ENCODE measurements at regions of chr6 and their contacts with region 1.

Region 1: DNA sequence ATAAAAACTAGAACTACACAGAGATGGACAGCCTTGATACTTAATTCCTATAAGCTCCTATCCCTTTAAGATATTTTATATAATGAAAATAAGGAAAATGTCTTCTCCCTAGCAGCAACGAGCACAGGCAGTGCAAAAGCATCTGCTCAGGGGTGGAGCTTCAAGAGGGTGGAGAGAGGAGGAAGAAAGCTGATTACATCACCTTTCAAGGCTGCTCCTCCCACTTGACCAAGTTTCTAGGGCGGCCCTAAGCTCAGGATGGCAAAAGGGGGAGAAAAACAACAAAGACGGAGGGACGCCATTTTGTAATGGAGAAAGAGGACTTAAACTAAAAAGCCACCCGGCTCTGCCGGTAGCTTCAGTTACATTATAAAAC is 2.2 kb downstream of the PPP1R10 start:
- DNase-seq: peak; percentile 76
- ATAC-seq: peak; percentile 63
- H3K4me3 Mint-ChIP-seq: peak overlapping the region; percentile 96
- H3K27ac Mint-ChIP-seq: peak overlapping the region; percentile 100
- H3K4me1 Mint-ChIP-seq: peaks cover 42% of the 10 kb centered on the region
- H3K27me3 Mint-ChIP-seq: no peaks in the 10 kb centered on the region; the same call in 1 of the 2 replicates
- CTCF ChIP-seq: no peak

Region 2: DNA sequence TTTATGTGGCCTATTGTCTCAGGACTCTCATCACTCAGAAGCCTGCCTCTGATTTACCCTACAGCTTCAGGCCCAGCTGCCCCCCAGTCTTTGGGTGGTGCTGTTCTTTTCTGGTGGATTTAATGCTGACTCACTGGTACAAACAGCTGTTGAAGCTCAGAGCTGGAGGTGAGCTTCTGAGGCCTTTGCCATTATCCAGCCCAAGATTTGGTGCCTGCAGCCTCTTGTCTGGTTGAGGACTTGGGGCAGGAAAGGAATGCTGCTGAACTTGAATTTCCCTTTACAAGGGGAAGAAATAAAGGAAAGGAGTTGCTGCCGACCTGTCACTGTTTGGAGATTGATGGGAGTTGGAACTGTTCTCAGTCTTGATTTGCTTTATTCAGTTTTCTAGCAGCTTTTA is 23.8 kb before region 1 on chr6:
- CTCF ChIA-PET with region 1: interaction called, 13 read pairs
- POLR2A ChIA-PET with region 1: interaction called, 33 read pairs
- DNase-seq: no peak
- ATAC-seq: no peak
- H3K4me3 Mint-ChIP-seq: no peak overlapping the region
- H3K27ac Mint-ChIP-seq: no peak overlapping the region
- H3K4me1 Mint-ChIP-seq: no peaks in the 10 kb centered on the region
- H3K27me3 Mint-ChIP-seq: no peaks in the 10 kb centered on the region
- CTCF ChIP-seq: no peak

Region 3: DNA sequence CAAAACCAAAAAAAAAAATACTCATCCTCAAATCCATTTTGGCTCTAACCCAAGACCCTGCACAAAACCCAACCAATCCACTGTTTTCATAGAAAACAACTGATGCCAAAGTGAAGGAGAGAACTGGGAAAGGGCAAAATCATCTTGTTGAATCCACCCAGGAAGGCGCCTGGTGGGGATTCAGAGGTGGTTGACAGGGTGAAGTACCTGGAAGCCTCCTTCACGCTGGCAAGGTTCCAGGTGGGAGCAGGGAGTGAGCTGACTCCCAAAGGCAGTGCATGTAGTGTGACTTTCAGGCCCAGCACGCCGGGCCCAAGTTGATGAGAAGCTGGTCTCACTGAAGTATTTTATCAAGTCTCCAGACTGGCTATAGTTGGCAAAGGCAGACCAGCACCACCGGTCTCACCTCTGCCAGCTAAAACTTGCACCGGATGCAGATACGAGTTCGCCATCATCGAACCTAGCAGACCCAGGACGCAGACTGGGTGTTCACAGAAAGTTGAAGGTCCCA is 14.3 kb before region 1 on chr6:
- CTCF ChIA-PET with region 1: interaction called, 13 read pairs
- POLR2A ChIA-PET with region 1: interaction called, 33 read pairs
- DNase-seq: no peak
- ATAC-seq: no peak
- H3K4me3 Mint-ChIP-seq: no peak overlapping the region
- H3K27ac Mint-ChIP-seq: no peak overlapping the region
- H3K4me1 Mint-ChIP-seq: no peaks in the 10 kb centered on the region
- H3K27me3 Mint-ChIP-seq: no peaks in the 10 kb centered on the region
- CTCF ChIP-seq: no peak

Region 4: GRCh38 chr6:30672445-30673253 is 57.8 kb after region 1 on chr6 and contains the start of gene DHX16:
- CTCF ChIA-PET with region 1: interaction called, 10 read pairs
- POLR2A ChIA-PET with region 1: interaction called, 5 read pairs
- DNase-seq: peak; percentile 89
- ATAC-seq: peak; percentile 83
- H3K4me3 Mint-ChIP-seq: peak within 1 kb of the TSS; percentile 93
- H3K27ac Mint-ChIP-seq: peak within 1 kb of the TSS; percentile 58
- H3K4me1 Mint-ChIP-seq: peaks cover 8% of the 10 kb centered on the region
- H3K27me3 Mint-ChIP-seq: no peaks in the 10 kb centered on the region
- CTCF ChIP-seq: peak; percentile 40; the same call in 1 of the 2 replicates
- total RNA-seq, gene DHX16: 27.3 to 32.2 TPM (median 30.6 TPM) in 3 replicates

Measured in WTC11 (cell line).